Right ventricle myocardium superior (tissue), 1 donor: ENCODE measurements at regions of chr2 and their contacts with region 1.

Region 1: DNA sequence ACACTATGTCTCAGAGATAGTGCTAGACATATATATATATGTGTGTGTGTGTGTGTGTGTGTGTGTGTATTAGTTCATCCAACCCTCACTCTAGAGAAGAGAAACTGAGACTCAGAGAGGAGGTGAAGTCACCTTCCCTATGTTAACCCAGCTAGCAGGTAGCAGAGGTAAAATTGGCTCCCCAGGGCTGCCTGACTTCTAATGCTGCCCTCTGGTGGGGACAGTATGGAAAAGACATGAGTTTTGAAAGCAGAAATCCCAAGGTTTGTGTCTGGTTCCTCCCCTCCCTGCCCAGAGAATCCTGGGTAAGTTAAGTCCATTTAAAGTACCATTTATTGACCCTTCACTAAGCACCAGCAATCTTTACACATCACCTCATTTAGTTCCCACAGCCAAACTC is 137.7 kb downstream of the THNSL2 start:
- DNase-seq: no peak
- ATAC-seq: no peak

Region 2: GRCh38 chr2:88190808-88191721 is 116.8 kb before region 1 on chr2:
- intact Hi-C with region 1: loop called (anchors 5 kb)
- DNase-seq: no peak
- ATAC-seq: peak; percentile 55